Dendritic cell treated with granulocyte-macrophage colony-stimulating factor and Interleukin-4, amounts not matched to agents 40 ng/mL and 50 ng/mL, for 4 days (primary cell): ENCODE measurements at regions of chr21 and their contacts with region 1.

Region 1: DNA sequence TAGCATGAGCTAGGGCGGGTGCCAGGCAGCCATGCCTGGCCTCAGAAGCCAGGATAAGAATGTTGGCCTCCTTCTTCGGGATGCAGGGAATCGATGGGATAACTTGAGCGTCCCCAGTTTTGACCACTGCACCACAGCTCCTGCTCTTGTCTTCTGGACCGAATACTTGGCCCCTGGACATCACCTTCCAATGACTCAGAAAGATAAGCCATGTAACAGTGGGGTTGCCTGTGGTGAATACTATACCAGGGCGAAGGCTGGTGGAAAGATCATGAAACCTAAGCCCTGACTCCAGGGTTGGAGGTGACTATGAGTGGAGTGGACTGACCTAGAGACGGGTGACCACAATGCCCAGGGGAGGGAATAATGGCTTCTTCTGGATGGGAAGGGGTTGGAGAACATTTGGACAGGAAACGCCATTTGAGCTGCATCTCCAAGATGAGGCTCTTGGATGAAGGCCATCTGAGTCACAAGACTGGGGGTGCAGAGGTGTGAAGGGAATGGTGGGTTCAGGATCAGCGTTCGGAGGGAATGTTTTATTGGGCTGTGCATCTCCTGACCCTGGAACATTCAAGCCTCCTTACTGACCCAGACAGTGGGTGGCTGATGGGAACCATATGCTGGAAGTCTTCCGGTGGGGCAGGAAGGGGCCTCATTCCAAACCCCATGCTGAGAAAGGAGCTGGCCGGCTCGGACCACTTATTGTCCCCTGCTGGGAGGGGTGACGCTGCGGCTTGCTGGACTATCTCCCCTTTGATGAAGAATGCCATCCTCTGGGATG is 18.5 kb upstream of the KCNE2 start:
- H3K4me3 Mint-ChIP-seq: no peak overlapping the region
- H3K27ac Mint-ChIP-seq: no peak overlapping the region
- H3K4me1 Mint-ChIP-seq: no peaks in the 10 kb centered on the region
- H3K27me3 Mint-ChIP-seq: peaks cover 11% of the 10 kb centered on the region

Region 2: DNA sequence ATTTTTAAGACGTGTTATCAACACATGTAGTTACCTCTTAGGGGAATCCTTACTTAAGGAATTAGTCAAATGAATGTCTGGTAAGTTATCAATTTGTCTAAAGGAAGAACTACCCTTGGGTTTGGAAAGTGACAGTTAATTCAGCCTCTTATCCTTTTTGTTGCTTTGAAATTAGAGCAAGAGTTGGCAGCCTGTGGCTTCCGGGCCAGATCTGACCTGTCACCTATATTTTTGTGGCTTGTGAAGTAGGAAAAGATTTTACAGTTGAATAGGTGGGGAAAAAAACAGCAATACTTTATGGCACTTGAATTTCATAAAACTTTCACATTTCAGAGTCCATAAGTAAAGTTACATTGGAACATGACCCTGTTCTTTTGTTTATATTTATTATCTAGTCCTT is 266.4 kb before region 1 on chr21:
- intact Hi-C with region 1: loop called (anchors 5 kb)
- H3K4me3 Mint-ChIP-seq: peak overlapping the region; percentile 32
- H3K27ac Mint-ChIP-seq: no peak overlapping the region
- H3K4me1 Mint-ChIP-seq: peaks cover 89% of the 10 kb centered on the region
- H3K27me3 Mint-ChIP-seq: no peaks in the 10 kb centered on the region